Naive thymus-derived CD8-positive, alpha-beta T cell (primary cell): ENCODE measurements at regions of chr11 and their contacts with region 1.

Region 1: DNA sequence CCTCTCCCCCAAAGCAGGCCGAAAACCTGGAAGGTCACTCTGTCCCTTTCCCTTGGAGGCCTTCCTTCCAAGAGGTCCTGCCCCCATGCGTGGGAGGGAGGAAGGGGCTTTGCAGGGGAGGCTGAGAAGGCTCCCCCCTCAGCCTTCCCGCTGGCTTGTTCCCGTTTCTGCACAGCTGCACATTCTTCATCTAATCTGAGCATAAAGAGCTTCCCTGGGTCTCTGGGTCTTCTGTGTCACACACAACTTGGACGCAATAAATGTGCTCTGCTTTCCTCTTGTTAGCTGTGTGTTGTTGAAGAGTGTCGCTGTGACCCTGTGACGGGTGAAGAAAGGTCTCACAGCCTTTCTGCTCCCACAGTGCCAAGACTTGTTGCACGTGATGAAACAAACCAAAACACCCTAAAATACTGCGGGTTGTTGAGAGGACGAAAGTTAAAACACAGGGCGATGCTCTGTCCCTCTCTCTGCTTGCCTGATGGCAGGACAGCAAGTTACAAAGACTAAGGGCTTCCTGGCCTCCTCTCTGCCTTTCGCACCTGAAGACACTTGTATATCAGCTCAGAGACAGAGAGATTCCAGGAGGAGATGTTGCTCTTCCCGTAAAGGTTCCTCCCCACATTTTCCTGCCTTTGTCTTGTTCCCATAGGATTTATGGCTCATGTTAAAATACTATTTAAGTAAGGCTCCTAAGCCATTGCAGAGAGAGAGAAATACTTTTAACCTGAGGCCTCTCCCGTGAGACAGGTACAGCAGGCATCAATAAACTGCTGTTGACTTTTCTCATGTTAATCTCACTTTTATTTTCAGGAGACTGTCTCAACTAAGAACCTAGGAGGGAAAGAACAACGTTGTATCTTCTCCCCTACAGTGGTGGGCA is 15.4 kb upstream of the IFITM3 start:
- DNase-seq: no peak
- ATAC-seq: peak in 1 of 2 donors; percentile 27
- H3K4me3 Mint-ChIP-seq: peak overlapping the region in 7 of 10 donors; percentile 12 to 75 (median 45)
- H3K27ac Mint-ChIP-seq: peak overlapping the region; percentile 10 to 88 (median 70)
- H3K4me1 Mint-ChIP-seq: peaks cover 24 to 62% (median 50%) of the 10 kb centered on the region in 4 donors
- H3K27me3 Mint-ChIP-seq: no peaks in the 10 kb centered on the region

Region 2: GRCh38 chr11:363948-364761 is 28.1 kb after region 1 on chr11:
- POLR2A ChIA-PET with region 1: no interaction called
- DNase-seq: peak in 8 of 10 donors; percentile 42 to 63 (median 52)
- ATAC-seq: peak; percentile 66 to 81
- H3K4me3 Mint-ChIP-seq: peak overlapping the region in 1 of 10 donors; percentile 57
- H3K27ac Mint-ChIP-seq: peak overlapping the region in 2 of 10 donors; percentile 67 to 85
- H3K4me1 Mint-ChIP-seq: peaks cover 10 to 27% (median 20%) of the 10 kb centered on the region in 4 donors
- H3K27me3 Mint-ChIP-seq: peaks cover 12 to 42% (median 21%) of the 10 kb centered on the region in 5 donors

Region 3: GRCh38 chr11:422249-422656 is 86.2 kb after region 1 on chr11:
- POLR2A ChIA-PET with region 1: interaction called, 10 read pairs
- DNase-seq: peak in 2 of 10 donors; percentile 0 to 34
- ATAC-seq: no peak
- H3K4me3 Mint-ChIP-seq: no peak overlapping the region
- H3K27ac Mint-ChIP-seq: peak overlapping the region in 1 of 10 donors; percentile 80
- H3K4me1 Mint-ChIP-seq: peaks cover 2 to 7% (median 5%) of the 10 kb centered on the region in 4 donors
- H3K27me3 Mint-ChIP-seq: no peaks in the 10 kb centered on the region